Prostate gland (tissue), 2 donors: ENCODE measurements at regions of chrX and their contacts with region 1.

Region 1: DNA sequence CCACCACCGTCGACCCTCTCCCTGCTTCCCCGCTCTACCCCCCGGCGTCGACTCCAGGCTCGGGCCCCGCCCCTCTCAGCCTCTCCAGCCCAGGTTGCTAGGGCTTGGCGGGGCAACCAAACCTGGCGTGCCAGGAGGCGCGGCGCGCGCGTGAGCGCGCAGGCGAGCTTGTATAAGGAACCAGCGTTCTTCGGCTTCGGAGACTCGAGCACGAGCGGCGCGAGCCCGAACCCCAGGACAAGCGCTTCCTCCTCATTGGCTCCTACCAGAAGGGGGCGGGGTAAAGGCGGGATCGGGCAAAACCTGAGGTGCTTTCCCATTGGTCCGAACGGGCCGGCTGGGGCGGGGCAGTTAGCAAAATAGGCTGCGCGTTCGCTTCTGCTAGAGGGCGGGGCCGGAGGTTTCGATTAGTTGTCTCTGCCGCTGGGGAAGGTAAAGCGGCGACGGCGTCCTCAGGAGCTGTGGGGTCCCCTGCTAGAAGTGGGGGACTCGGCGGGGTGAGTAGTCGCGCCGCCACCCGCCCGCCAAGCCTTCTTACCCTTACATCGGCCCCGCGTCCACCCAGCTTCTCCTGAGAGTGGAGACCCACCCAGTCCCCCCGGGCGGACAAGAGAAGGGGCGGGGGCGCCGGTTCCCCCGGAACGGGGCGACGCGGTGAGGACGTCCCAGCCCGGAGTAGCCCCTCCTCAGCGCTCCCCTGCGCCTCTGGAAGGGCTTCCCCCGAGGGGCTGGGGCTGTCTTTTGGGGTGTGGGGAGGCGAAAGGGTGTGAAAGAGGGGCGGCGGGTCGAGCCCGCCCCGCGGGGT is at the start of gene CDKL5:
- DNase-seq: peak; percentile 97
- H3K4me3 ChIP-seq: peak within 1 kb of the TSS; percentile 70 to 75
- H3K27ac ChIP-seq: peak within 1 kb of the TSS; percentile 85 to 88
- H3K4me1 ChIP-seq: no peaks in the 10 kb centered on the region
- H3K27me3 ChIP-seq: no peaks in the 10 kb centered on the region
- CTCF ChIP-seq: peak in 2 of 4 experiments; percentile 11 to 28
- POLR2A ChIP-seq: peak; percentile 88
- total RNA-seq, gene CDKL5: 14.5 to 18.8 TPM

Region 2: DNA sequence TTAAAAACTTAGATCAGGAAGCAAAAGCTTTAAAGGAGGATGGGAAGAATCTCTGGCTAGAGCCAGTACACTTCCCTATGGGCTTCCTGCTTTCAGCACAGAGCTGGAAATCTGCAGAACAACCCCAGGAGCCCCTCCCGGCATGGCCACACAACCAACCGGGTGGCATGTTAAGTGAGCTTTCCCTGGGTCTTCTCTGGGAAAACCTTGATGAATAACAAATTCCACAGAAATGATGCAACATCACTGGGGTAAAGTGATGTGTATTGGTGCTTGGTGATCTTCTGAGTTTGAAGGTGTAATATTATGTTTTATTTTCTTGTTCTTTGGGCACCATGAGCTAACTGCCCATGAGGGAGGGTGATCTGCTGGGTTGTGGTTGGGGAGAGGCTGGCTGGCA is 1028.3 kb before region 1 on chrX:
- intact Hi-C with region 1: no loop called
- DNase-seq: no peak
- H3K4me3 ChIP-seq: no peak overlapping the region
- H3K27ac ChIP-seq: no peak overlapping the region
- H3K4me1 ChIP-seq: no peaks in the 10 kb centered on the region
- H3K27me3 ChIP-seq: no peaks in the 10 kb centered on the region
- CTCF ChIP-seq: no peak
- POLR2A ChIP-seq: no peak

Region 3: DNA sequence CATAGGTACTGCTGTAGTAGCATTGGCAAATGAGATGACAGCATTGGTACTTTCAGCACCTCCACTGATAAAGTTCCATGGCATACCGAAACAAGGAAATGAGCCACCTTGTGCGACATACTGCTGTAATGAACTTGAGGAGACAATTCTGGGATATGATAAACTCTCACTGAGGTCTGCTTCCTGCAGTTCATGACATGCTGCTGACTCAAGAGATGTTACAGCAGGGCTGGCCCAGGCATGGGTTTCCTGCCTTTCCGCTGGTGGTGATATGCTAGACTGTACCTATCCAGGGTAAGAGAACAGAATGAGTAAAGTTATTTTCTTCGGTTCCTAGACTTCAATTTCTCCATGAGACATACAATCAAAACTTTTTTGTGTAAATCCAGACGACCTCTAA is 221.8 kb before region 1 on chrX:
- intact Hi-C with region 1: no loop called
- DNase-seq: no peak
- H3K4me3 ChIP-seq: no peak overlapping the region
- H3K27ac ChIP-seq: no peak overlapping the region
- H3K4me1 ChIP-seq: no peaks in the 10 kb centered on the region
- H3K27me3 ChIP-seq: no peaks in the 10 kb centered on the region
- CTCF ChIP-seq: no peak
- POLR2A ChIP-seq: no peak

Region 4: GRCh38 chrX:18674788-18675735 is 249.7 kb after region 1 on chrX:
- intact Hi-C with region 1: loop called (anchors 10 kb)
- DNase-seq: peak; percentile 69
- H3K4me3 ChIP-seq: peak overlapping the region; percentile 48 to 53
- H3K27ac ChIP-seq: peak overlapping the region; percentile 89
- H3K4me1 ChIP-seq: no peaks in the 10 kb centered on the region
- H3K27me3 ChIP-seq: no peaks in the 10 kb centered on the region
- CTCF ChIP-seq: no peak
- POLR2A ChIP-seq: peak; percentile 42

Region 5: GRCh38 chrX:18899796-18900447 is 474.5 kb after region 1 on chrX:
- intact Hi-C with region 1: loop called (anchors 10 kb)
- DNase-seq: peak; percentile 19
- H3K4me3 ChIP-seq: no peak overlapping the region
- H3K27ac ChIP-seq: peak overlapping the region in 1 of 2 donors; percentile 41
- H3K4me1 ChIP-seq: no peaks in the 10 kb centered on the region
- H3K27me3 ChIP-seq: no peaks in the 10 kb centered on the region
- CTCF ChIP-seq: peak in 2 of 4 experiments; percentile 21 to 37
- POLR2A ChIP-seq: no peak